CD8-positive, alpha-beta T cell (primary cell): ENCODE measurements at regions of chr1 and their contacts with region 1.

Region 1: DNA sequence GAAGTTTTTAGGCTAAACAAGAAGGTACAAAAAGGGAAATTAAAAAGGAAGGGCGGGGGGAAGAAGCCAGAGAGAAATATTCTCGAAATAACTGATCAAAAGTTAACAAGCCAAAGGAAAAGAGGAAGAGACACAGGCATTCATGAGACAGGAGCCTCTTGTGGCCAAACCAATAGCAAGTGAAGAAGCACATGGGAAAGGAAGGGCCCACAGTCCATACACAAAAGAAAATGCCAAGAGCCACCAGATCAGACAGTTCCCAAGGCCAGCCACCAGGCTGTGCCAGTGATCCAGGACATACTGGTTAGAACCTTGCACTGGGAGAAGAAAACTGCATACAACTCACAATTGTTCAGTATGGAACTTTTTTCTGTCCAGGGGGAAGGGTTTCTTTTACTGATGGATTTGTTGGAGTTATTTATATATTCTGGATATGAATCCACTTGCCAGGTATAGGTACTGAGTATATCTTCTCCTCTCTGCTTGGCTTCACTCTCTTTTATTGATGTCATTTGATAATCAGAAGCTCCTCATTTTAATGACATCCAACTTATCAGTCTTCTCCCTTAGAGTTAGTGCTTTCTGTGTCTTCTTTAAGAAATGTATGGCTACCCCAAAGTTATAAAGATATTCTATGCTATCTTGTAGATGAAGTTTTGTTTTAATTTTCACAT is 76.8 kb downstream of the CD46 start:
- DNase-seq: peak in 8 of 9 experiments; percentile 35 to 83 (median 64)
- ATAC-seq: peak; percentile 19
- H3K4me3 ChIP-seq: no peak overlapping the region
- H3K4me3 Mint-ChIP-seq: no peak overlapping the region
- H3K27ac ChIP-seq: peak overlapping the region in 1 of 2 experiments; percentile 29
- H3K27ac Mint-ChIP-seq: peak overlapping the region; percentile 47
- H3K4me1 ChIP-seq: peaks cover 76% of the 10 kb centered on the region
- H3K4me1 Mint-ChIP-seq: peaks cover 94% of the 10 kb centered on the region
- H3K27me3 ChIP-seq: no peaks in the 10 kb centered on the region
- H3K27me3 Mint-ChIP-seq: no peaks in the 10 kb centered on the region
- CTCF ChIP-seq: peak; percentile 78

Region 2: GRCh38 chr1:207654320-207654719 is 174.3 kb before region 1 on chr1:
- CTCF ChIA-PET with region 1: no interaction called
- POLR2A ChIA-PET with region 1: no interaction called
- intact Hi-C with region 1: no loop called
- DNase-seq: no peak
- ATAC-seq: no peak
- H3K4me3 ChIP-seq: no peak overlapping the region
- H3K4me3 Mint-ChIP-seq: no peak overlapping the region
- H3K27ac ChIP-seq: no peak overlapping the region
- H3K27ac Mint-ChIP-seq: no peak overlapping the region
- H3K4me1 ChIP-seq: no peaks in the 10 kb centered on the region
- H3K4me1 Mint-ChIP-seq: no peaks in the 10 kb centered on the region
- H3K27me3 ChIP-seq: no peaks in the 10 kb centered on the region
- H3K27me3 Mint-ChIP-seq: peaks cover 8% of the 10 kb centered on the region
- CTCF ChIP-seq: no peak

Region 3: DNA sequence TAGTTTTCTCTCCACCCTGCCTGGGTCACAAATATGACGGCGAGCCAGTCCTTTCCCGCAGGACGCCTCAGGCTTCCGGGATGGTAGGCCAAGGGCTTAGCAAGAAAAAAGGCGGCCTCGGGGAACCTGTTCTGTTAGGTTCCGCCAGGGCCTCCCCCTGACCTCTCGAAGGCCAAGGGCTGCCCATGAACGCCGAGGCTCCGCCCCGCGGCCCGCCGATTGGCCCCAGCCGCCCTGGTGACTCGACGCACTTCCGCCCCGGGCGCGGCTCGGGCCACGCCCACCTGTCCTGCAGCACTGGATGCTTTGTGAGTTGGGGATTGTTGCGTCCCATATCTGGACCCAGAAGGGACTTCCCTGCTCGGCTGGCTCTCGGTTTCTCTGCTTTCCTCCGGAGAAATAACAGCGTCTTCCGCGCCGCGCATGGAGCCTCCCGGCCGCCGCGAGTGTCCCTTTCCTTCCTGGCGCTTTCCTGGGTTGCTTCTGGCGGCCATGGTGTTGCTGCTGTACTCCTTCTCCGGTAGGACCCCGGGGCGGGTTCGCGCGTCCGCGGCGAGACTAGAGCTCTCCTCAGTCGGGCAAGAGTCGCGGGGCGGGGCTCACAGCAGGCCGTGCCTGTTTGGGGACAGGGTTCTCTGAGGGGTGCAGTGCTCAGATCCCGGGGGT is 76.7 kb before region 1 on chr1 and contains the start of gene CD46:
- CTCF ChIA-PET with region 1: no interaction called
- POLR2A ChIA-PET with region 1: no interaction called
- intact Hi-C with region 1: loop called in 1 of 2 experiments (anchors 2 kb)
- DNase-seq: peak; percentile 85 to 97 (median 94)
- ATAC-seq: peak; percentile 95
- H3K4me3 ChIP-seq: peak within 1 kb of the TSS; percentile 76 to 91
- H3K4me3 Mint-ChIP-seq: peak within 1 kb of the TSS; percentile 100
- H3K27ac ChIP-seq: peak within 1 kb of the TSS; percentile 58 to 90
- H3K27ac Mint-ChIP-seq: peak within 1 kb of the TSS; percentile 97
- H3K4me1 ChIP-seq: peaks cover 51% of the 10 kb centered on the region
- H3K4me1 Mint-ChIP-seq: peaks cover 81% of the 10 kb centered on the region
- H3K27me3 ChIP-seq: no peaks in the 10 kb centered on the region
- H3K27me3 Mint-ChIP-seq: no peaks in the 10 kb centered on the region
- CTCF ChIP-seq: no peak
- total RNA-seq, gene CD46: 108 to 109 TPM

Region 4: DNA sequence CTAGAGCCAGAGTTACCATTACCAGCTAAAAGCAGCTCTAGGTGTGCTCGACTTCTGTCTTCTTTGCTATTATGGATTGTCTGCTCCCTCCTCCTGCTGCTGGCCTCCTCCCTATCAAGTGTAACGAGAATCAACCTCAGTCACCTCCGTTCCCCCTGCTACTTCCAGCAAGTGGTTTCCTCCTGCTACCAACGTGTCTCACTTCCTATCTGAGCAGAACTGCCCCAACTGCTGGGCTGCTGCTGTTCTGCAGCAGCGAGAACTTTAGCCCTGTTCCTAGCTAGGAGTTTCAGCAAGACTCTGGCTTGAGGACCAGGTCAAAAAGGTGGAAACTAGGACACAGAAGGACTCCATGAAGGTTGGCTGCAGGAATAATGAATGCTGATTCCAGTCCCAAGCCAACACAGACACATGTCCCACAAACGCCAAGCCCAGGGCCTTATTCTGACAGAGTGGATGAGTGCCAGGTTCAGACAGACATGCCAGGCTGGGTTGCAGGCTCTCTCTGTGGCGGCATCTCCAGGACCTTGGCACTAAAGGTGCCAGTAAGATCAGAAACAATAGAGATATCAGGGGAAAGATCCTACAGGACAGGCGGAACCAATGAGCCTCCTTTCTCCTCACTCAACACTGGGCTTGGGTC is 35.4 kb after region 1 on chr1:
- CTCF ChIA-PET with region 1: interaction called, 321 read pairs
- POLR2A ChIA-PET with region 1: interaction called, 62 read pairs
- intact Hi-C with region 1: loop called (anchors 1 kb)
- DNase-seq: peak in 7 of 9 experiments; percentile 36 to 80 (median 61)
- ATAC-seq: peak; percentile 47
- H3K4me3 ChIP-seq: peak overlapping the region in 1 of 2 experiments; percentile 5
- H3K4me3 Mint-ChIP-seq: peak overlapping the region; percentile 56
- H3K27ac ChIP-seq: peak overlapping the region; percentile 23 to 61
- H3K27ac Mint-ChIP-seq: peak overlapping the region; percentile 96
- H3K4me1 ChIP-seq: peaks cover 77% of the 10 kb centered on the region
- H3K4me1 Mint-ChIP-seq: peaks cover 74% of the 10 kb centered on the region
- H3K27me3 ChIP-seq: no peaks in the 10 kb centered on the region
- H3K27me3 Mint-ChIP-seq: no peaks in the 10 kb centered on the region
- CTCF ChIP-seq: no peak

Region 5: DNA sequence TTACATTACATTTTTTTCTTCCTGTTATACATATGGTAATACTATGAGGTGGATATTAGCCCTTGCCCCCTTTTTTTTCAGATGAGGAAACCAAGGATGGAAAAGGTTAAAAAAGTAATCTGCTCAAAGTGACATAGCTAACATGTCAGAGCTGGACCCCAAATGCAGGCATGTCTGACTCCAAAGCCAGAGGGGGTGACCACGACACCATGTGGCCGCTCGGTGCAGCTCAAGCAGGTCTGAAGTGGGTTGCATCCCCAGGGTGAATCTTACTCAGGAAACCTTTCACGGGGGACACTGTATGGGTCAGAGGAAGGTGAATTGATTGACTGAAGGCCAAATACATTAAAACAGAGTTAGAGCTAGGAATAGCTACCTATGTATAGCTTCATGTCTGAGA is 47.5 kb after region 1 on chr1:
- CTCF ChIA-PET with region 1: interaction called, 321 read pairs
- POLR2A ChIA-PET with region 1: interaction called, 16 read pairs
- intact Hi-C with region 1: no loop called
- DNase-seq: peak in 2 of 9 experiments; percentile 29 to 43
- ATAC-seq: no peak
- H3K4me3 ChIP-seq: no peak overlapping the region
- H3K4me3 Mint-ChIP-seq: no peak overlapping the region
- H3K27ac ChIP-seq: no peak overlapping the region
- H3K27ac Mint-ChIP-seq: peak overlapping the region; percentile 14
- H3K4me1 ChIP-seq: peaks cover 32% of the 10 kb centered on the region
- H3K4me1 Mint-ChIP-seq: peaks cover 47% of the 10 kb centered on the region
- H3K27me3 ChIP-seq: no peaks in the 10 kb centered on the region
- H3K27me3 Mint-ChIP-seq: peaks cover 1% of the 10 kb centered on the region
- CTCF ChIP-seq: no peak

Region 6: GRCh38 chr1:208245185-208245705 is 416.6 kb after region 1 on chr1:
- CTCF ChIA-PET with region 1: interaction called, 4 read pairs
- POLR2A ChIA-PET with region 1: no interaction called
- intact Hi-C with region 1: loop called (anchors 10 kb)
- DNase-seq: peak; percentile 61 to 87 (median 77)
- ATAC-seq: peak; percentile 56
- H3K4me3 ChIP-seq: peak overlapping the region; percentile 71 to 78
- H3K4me3 Mint-ChIP-seq: peak overlapping the region; percentile 80
- H3K27ac ChIP-seq: peak overlapping the region; percentile 35 to 71
- H3K27ac Mint-ChIP-seq: peak overlapping the region; percentile 9
- H3K4me1 ChIP-seq: peaks cover 4% of the 10 kb centered on the region
- H3K4me1 Mint-ChIP-seq: peaks cover 6% of the 10 kb centered on the region
- H3K27me3 ChIP-seq: peaks cover 0 to 6% of the 10 kb centered on the region in 2 experiments
- H3K27me3 Mint-ChIP-seq: peaks cover 18% of the 10 kb centered on the region
- CTCF ChIP-seq: peak; percentile 76